Caco-2 (cell line): ENCODE measurements at regions of chr3 and their contacts with region 1.

Region 1: GRCh38 chr3:153291056-153291685 is 129.1 kb downstream of the RAP2B start:
- DNase-seq: peak in 1 of 2 experiments; percentile 29
- H3K4me3 ChIP-seq: no peak overlapping the region
- H3K4me3 Mint-ChIP-seq: no peak overlapping the region
- H3K27ac Mint-ChIP-seq: no peak overlapping the region
- H3K4me1 ChIP-seq: no peaks in the 10 kb centered on the region
- H3K4me1 Mint-ChIP-seq: no peaks in the 10 kb centered on the region
- H3K27me3 ChIP-seq: no peaks in the 10 kb centered on the region
- H3K27me3 Mint-ChIP-seq: no peaks in the 10 kb centered on the region
- CTCF ChIP-seq: peak; percentile 51 to 63

Region 2: DNA sequence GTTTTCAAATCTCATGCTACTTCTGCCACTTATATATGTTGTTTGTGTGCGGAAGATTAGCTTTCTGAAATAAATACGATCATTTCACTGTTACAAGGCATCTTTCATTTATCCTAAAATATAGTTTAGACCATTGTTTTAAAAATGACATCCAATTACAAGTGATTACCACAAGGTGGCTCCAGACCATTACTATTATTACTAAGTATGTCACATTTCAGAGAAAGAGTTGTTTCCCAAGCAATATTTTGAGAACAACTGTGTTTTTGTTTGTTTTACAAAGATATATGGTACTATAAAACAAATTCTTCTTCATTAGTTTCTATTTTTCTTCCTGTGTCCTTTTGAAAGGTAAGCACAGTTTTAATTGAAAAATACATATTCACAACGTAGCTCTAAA is 265.1 kb before region 1 on chr3:
- CTCF ChIA-PET with region 1: no interaction called
- POLR2A ChIA-PET with region 1: no interaction called
- intact Hi-C with region 1: loop called (anchors 1 kb)
- DNase-seq: peak in 1 of 2 experiments; percentile 12
- H3K4me3 ChIP-seq: no peak overlapping the region
- H3K4me3 Mint-ChIP-seq: no peak overlapping the region
- H3K27ac Mint-ChIP-seq: no peak overlapping the region
- H3K4me1 ChIP-seq: no peaks in the 10 kb centered on the region
- H3K4me1 Mint-ChIP-seq: no peaks in the 10 kb centered on the region
- H3K27me3 ChIP-seq: no peaks in the 10 kb centered on the region
- H3K27me3 Mint-ChIP-seq: peaks cover 5% of the 10 kb centered on the region
- CTCF ChIP-seq: peak; percentile 49 to 54

Region 3: DNA sequence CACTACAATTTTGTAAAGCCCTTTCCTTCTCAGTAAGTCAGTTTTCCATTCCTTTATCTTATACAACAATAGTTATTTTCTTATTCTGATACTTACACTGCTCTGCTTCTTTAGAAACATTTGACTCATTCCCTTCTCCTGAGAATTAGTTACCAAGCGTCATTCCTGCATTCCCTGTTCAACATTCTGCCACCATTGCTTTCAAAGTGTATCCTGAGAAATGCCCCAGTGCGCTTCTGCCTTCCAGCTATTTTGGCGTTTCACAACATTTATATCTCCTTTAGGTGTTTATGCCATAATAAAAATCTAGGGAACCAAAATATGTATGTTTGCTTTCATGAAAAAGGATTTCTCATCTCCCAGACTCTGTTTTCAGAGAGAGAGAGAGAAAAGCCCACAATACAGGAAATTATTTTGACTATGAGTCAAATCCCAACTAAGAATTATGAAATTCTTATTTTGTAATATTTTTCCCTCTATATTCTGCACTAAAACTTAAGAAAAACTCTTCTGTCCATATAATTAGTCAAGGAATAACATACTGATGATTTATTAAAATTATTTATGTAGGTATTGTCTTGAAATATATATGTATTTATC is 247.3 kb before region 1 on chr3:
- CTCF ChIA-PET with region 1: interaction called, 10 read pairs
- POLR2A ChIA-PET with region 1: no interaction called
- intact Hi-C with region 1: loop called (anchors 1 kb)
- DNase-seq: no peak
- H3K4me3 ChIP-seq: no peak overlapping the region
- H3K4me3 Mint-ChIP-seq: peak overlapping the region; percentile 39
- H3K27ac Mint-ChIP-seq: peak overlapping the region; percentile 34
- H3K4me1 ChIP-seq: no peaks in the 10 kb centered on the region
- H3K4me1 Mint-ChIP-seq: peaks cover 6% of the 10 kb centered on the region
- H3K27me3 ChIP-seq: no peaks in the 10 kb centered on the region
- H3K27me3 Mint-ChIP-seq: no peaks in the 10 kb centered on the region
- CTCF ChIP-seq: no peak

Region 4: GRCh38 chr3:153350420-153350819 is 59.2 kb after region 1 on chr3:
- CTCF ChIA-PET with region 1: no interaction called
- POLR2A ChIA-PET with region 1: no interaction called
- intact Hi-C with region 1: loop called (anchors 5 kb)
- DNase-seq: peak in 1 of 2 experiments; percentile 66
- H3K4me3 ChIP-seq: no peak overlapping the region
- H3K4me3 Mint-ChIP-seq: peak overlapping the region; percentile 60
- H3K27ac Mint-ChIP-seq: peak overlapping the region; percentile 94
- H3K4me1 ChIP-seq: peaks cover 39% of the 10 kb centered on the region
- H3K4me1 Mint-ChIP-seq: peaks cover 29% of the 10 kb centered on the region
- H3K27me3 ChIP-seq: no peaks in the 10 kb centered on the region
- H3K27me3 Mint-ChIP-seq: no peaks in the 10 kb centered on the region
- CTCF ChIP-seq: no peak

Region 5: DNA sequence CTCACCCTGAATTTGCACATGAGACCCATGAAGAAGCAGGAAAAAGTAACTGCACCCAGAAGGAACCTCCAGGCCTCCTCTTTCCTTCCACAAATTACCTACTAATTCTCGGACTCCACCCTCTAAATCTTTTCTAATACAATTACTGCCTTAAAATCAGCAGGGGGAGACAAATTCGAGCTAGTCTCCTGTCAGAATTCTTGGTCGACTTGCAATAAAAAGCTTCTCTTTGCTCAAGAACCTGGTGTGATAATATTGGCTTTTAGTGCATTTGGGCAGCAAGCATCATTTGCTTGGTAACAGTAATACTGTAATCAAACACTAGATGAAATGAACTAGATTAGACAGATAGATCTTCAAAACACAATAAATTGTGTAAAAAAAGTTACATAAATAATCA is 152.8 kb after region 1 on chr3:
- CTCF ChIA-PET with region 1: no interaction called
- POLR2A ChIA-PET with region 1: no interaction called
- intact Hi-C with region 1: loop called (anchors 1 kb)
- DNase-seq: peak in 1 of 2 experiments; percentile 15
- H3K4me3 ChIP-seq: no peak overlapping the region
- H3K4me3 Mint-ChIP-seq: no peak overlapping the region
- H3K27ac Mint-ChIP-seq: no peak overlapping the region
- H3K4me1 ChIP-seq: no peaks in the 10 kb centered on the region
- H3K4me1 Mint-ChIP-seq: peaks cover 5% of the 10 kb centered on the region
- H3K27me3 ChIP-seq: no peaks in the 10 kb centered on the region
- H3K27me3 Mint-ChIP-seq: no peaks in the 10 kb centered on the region
- CTCF ChIP-seq: peak; percentile 20 to 33